ENCODE measurements at regions of chr3 and their contacts with region 1.

Region 1: DNA sequence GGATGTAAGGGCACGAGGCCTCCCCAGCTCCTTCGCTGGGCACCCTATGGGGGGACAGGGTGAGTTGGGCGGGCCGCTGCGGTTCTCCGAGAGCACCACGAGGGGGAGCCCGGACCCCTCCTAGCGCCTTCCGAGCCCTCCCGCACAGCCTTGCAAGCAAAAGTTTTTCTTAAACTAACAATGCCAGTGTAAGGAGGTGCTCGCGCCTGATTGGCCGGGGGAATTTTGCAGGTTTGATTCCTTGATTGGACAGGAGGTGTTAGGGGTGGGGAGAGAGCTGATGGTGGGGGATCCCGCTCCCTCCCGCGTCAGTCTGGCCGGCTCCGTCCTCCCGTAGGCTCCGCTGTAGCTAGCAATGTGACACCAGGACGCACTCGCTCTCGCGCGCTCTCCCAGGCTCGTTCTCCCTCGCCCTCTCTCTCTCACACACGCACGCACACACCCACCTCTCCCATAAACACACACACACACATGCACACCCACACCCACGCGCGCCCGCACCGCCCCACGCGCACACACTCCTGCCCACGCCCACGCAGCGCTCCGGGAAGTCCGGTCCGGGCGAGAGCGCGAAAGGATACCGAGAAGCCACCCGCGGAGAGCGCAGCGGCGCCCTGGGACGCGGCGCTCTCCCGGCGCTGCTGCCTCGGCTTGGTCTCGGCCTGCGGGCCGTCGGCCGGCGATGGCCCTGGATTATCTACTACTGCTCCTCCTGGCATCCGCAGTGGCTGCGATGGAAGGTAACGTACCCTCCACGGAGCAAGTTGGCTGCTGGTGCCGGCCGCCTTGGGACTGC is at the start of gene EPHB1:
- DNase-seq: peak; percentile 64
- ATAC-seq: peak; percentile 84
- H3K4me3 Mint-ChIP-seq: peak within 1 kb of the TSS; percentile 84
- H3K27ac Mint-ChIP-seq: no peak within 1 kb of the TSS
- H3K4me1 Mint-ChIP-seq: peaks cover 10% of the 10 kb centered on the region
- H3K27me3 Mint-ChIP-seq: peaks cover 41% of the 10 kb centered on the region
- CTCF ChIP-seq: no peak
- total RNA-seq, gene EPHB1: 2.8 and 3.8 TPM in 2 replicates

Region 2: GRCh38 chr3:134600685-134601463 is 194.3 kb before region 1 on chr3:
- CTCF ChIA-PET with region 1: interaction called, 4 read pairs
- POLR2A ChIA-PET with region 1: no interaction called
- intact Hi-C with region 1: loop called (anchors 1 kb)
- DNase-seq: peak; percentile 30
- ATAC-seq: no peak
- H3K4me3 Mint-ChIP-seq: no peak overlapping the region
- H3K27ac Mint-ChIP-seq: no peak overlapping the region
- H3K4me1 Mint-ChIP-seq: peaks cover 6% of the 10 kb centered on the region
- H3K27me3 Mint-ChIP-seq: no peaks in the 10 kb centered on the region
- CTCF ChIP-seq: peak; percentile 75

Region 3: GRCh38 chr3:134824791-134825190 is 29.6 kb after region 1 on chr3:
- CTCF ChIA-PET with region 1: no interaction called
- POLR2A ChIA-PET with region 1: no interaction called
- intact Hi-C with region 1: no loop called
- DNase-seq: no peak
- ATAC-seq: no peak
- H3K4me3 Mint-ChIP-seq: no peak overlapping the region
- H3K27ac Mint-ChIP-seq: no peak overlapping the region
- H3K4me1 Mint-ChIP-seq: no peaks in the 10 kb centered on the region
- H3K27me3 Mint-ChIP-seq: peaks cover 2% of the 10 kb centered on the region
- CTCF ChIP-seq: no peak

Region 4: DNA sequence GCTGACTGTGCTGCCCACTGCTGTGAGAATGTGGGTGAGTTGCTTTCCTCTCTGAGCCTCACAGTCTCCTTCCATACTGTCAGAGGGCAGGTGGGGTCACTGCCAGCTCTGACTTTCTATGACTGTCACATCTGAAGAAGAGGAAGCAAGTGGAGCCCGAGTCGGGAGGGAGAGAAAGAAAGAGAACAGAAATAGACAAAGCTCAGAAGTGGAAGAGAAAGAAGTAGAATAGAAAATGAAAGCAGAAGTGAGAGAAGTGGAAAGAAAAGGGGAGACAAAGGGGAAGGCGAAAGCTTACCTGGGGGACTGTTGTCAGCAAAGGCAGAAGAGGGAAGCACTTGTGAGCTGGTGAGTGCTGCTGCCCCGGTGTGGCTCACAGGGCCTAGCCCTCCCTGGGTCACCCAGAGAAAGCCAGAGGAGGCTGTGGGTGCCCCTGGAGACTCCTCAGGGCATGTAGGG is 57.8 kb after region 1 on chr3:
- CTCF ChIA-PET with region 1: interaction called, 11 read pairs
- POLR2A ChIA-PET with region 1: no interaction called
- intact Hi-C with region 1: loop called (anchors 1 kb)
- DNase-seq: peak; percentile 39
- ATAC-seq: peak; percentile 92
- H3K4me3 Mint-ChIP-seq: peak overlapping the region; percentile 48
- H3K27ac Mint-ChIP-seq: peak overlapping the region; percentile 76
- H3K4me1 Mint-ChIP-seq: peaks cover 31% of the 10 kb centered on the region
- H3K27me3 Mint-ChIP-seq: no peaks in the 10 kb centered on the region
- CTCF ChIP-seq: no peak

Region 5: DNA sequence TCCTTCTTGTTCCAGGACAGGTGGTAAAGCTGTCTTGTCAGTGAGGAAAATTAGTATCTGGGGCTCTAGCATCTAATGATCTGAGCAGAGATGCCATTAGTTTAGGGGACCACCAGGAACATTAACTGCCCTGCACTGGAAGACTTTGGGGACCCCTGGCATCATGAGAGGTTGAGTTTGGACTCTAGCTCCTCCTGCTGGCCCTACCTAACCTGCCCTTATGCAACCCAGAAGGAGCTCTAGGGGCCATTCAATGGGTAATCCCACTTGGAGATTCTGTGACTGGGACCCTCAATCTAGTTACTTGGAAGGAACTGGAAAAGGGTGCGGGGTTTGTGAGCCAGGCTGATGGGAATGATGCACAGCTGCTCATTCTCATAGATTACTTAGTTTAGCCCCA is 450.9 kb after region 1 on chr3:
- CTCF ChIA-PET with region 1: interaction called, 6 read pairs
- POLR2A ChIA-PET with region 1: no interaction called
- intact Hi-C with region 1: loop called (anchors 1 kb)
- DNase-seq: no peak
- ATAC-seq: no peak
- H3K4me3 Mint-ChIP-seq: no peak overlapping the region
- H3K27ac Mint-ChIP-seq: no peak overlapping the region
- H3K4me1 Mint-ChIP-seq: no peaks in the 10 kb centered on the region
- H3K27me3 Mint-ChIP-seq: no peaks in the 10 kb centered on the region
- CTCF ChIP-seq: no peak

Region 6: DNA sequence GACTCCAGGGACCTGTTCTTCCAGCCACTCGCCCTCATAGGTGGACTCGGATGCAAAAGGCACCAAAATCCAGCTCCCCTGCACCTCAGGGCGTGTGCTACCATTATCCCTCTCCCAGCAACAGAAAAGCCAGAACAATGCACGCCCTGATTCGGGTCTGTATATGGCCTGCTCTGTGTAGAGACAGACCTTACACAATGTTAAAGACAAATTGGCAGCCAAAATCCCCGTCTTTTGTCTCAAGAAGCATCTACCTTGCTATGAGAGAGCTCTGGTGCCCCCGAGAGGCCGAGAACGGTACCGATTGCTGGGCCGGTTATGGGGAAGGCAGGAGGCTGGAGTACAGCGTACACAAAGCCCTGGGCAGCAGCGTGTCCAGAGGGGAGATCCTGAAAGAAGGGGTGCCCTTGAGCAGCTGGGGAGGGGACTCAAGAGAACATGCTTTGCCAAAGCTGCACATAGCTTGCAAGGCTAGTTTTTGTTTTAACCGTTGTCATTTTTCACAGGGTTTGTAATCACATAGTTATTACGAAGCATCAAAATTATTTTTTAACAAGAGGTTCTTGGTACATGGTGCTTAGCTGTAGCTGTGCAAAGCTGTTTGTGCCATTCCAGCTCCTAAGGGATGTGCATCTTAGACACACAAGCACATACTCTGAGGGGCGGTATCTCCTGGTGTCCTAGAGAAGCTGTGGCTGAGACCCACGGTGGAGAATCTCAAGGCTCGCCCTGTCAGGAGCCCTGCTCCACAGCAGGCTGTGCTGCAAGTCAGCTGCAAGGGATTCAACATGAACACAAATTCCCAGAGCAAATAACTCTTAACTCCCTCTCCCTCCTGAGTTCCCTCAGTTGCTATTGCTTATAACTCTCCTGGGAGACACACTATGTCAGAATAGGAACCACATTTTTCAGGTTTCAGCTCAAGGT is 708.9 kb after region 1 on chr3:
- CTCF ChIA-PET with region 1: interaction called, 45 read pairs
- POLR2A ChIA-PET with region 1: no interaction called
- intact Hi-C with region 1: loop called (anchors 1 kb)
- DNase-seq: peak; percentile 26
- ATAC-seq: peak; percentile 64
- H3K4me3 Mint-ChIP-seq: peak overlapping the region; percentile 5
- H3K27ac Mint-ChIP-seq: no peak overlapping the region
- H3K4me1 Mint-ChIP-seq: peaks cover 11% of the 10 kb centered on the region
- H3K27me3 Mint-ChIP-seq: peaks cover 7% of the 10 kb centered on the region
- CTCF ChIP-seq: no peak

Region 7: DNA sequence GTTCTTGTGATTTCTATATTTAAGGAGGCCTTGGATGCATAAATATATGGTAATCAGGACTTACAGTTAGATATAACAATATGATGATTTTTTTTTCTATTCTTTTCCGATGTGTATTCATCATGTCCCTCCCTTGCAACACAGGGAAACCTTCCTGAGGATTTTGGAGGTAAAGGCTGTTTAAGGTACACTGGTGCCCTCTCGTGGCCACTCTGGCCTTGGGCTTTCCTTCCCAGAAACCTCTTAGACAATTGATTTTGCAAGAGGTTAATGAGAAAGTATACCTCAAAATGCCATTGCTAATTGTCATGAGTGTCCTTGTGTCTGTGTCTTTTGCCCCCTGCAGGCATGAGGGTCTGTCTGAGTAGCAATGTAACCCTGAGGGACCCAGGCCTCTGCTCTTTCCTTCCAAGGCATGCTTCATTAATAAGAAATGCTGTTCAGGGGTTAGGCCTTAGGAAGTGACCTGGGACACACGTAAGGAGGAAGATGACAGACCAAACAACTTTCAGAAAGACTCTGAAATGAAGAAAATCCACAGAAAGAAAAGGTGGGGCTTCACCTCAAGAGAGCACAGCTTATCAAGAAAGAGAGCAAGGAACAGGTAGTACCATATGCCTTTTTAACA is 1100.1 kb after region 1 on chr3:
- CTCF ChIA-PET with region 1: interaction called, 12 read pairs
- POLR2A ChIA-PET with region 1: no interaction called
- intact Hi-C with region 1: loop called (anchors 1 kb)
- DNase-seq: peak; percentile 20
- ATAC-seq: no peak
- H3K4me3 Mint-ChIP-seq: no peak overlapping the region
- H3K27ac Mint-ChIP-seq: no peak overlapping the region
- H3K4me1 Mint-ChIP-seq: no peaks in the 10 kb centered on the region
- H3K27me3 Mint-ChIP-seq: no peaks in the 10 kb centered on the region
- CTCF ChIP-seq: peak; percentile 58

Region 8: GRCh38 chr3:136042608-136043221 is 1247.6 kb after region 1 on chr3:
- CTCF ChIA-PET with region 1: interaction called, 11 read pairs
- POLR2A ChIA-PET with region 1: no interaction called
- intact Hi-C with region 1: no loop called
- DNase-seq: no peak
- ATAC-seq: no peak
- H3K4me3 Mint-ChIP-seq: no peak overlapping the region
- H3K27ac Mint-ChIP-seq: no peak overlapping the region
- H3K4me1 Mint-ChIP-seq: no peaks in the 10 kb centered on the region
- H3K27me3 Mint-ChIP-seq: peaks cover 18% of the 10 kb centered on the region
- CTCF ChIP-seq: no peak

Measured in activated B cell treated with CpG ODN at 0.5 μM for 24 hours (primary cell).